Ovary (tissue), 10 donors: ENCODE measurements at regions of chr16 and their contacts with region 1.

Region 1: GRCh38 chr16:81729451-81729850 is 49.6 kb upstream of the PLCG2 start:
- DNase-seq: peak in 1 of 5 donors; percentile 43
- H3K4me3 ChIP-seq: no peak overlapping the region
- H3K27ac ChIP-seq: no peak overlapping the region
- H3K4me1 ChIP-seq: no peaks in the 10 kb centered on the region
- H3K27me3 ChIP-seq: no peaks in the 10 kb centered on the region
- CTCF ChIP-seq: no peak
- EP300 ChIP-seq: no peak
- POLR2A ChIP-seq: no peak

Region 2: GRCh38 chr16:81403616-81404373 is 325.7 kb before region 1 on chr16:
- intact Hi-C with region 1: loop called in 2 of 4 experiments (anchors 5 kb)
- DNase-seq: peak; percentile 79 to 91 (median 88)
- H3K4me3 ChIP-seq: peak overlapping the region; percentile 15
- H3K27ac ChIP-seq: no peak overlapping the region
- H3K4me1 ChIP-seq: peaks cover 1% of the 10 kb centered on the region
- H3K27me3 ChIP-seq: no peaks in the 10 kb centered on the region
- CTCF ChIP-seq: peak; percentile 91 to 94 (median 93)
- EP300 ChIP-seq: no peak
- POLR2A ChIP-seq: no peak

Region 3: GRCh38 chr16:82043680-82044584 is 314.5 kb after region 1 on chr16:
- intact Hi-C with region 1: no loop called
- DNase-seq: no peak
- H3K4me3 ChIP-seq: no peak overlapping the region
- H3K27ac ChIP-seq: no peak overlapping the region
- H3K4me1 ChIP-seq: no peaks in the 10 kb centered on the region
- H3K27me3 ChIP-seq: no peaks in the 10 kb centered on the region
- CTCF ChIP-seq: no peak
- EP300 ChIP-seq: no peak
- POLR2A ChIP-seq: no peak